Activated B cell treated with CpG ODN at 0.5 μM for 24 hours (primary cell): ENCODE measurements at regions of chr14 and their contacts with region 1.

Region 1: GRCh38 chr14:29927376-29928116 is at the start of gene PRKD1:
- DNase-seq: peak; percentile 32
- ATAC-seq: peak; percentile 68
- H3K4me3 Mint-ChIP-seq: peak within 1 kb of the TSS; percentile 82
- H3K27ac Mint-ChIP-seq: peak within 1 kb of the TSS; percentile 15
- H3K4me1 Mint-ChIP-seq: peaks cover 8% of the 10 kb centered on the region
- H3K27me3 Mint-ChIP-seq: peaks cover 18% of the 10 kb centered on the region
- CTCF ChIP-seq: no peak
- total RNA-seq, gene PRKD1: 5.1 and 6.7 TPM in 2 replicates

Region 2: GRCh38 chr14:29741909-29742401 is 185.6 kb before region 1 on chr14:
- CTCF ChIA-PET with region 1: no interaction called
- POLR2A ChIA-PET with region 1: no interaction called
- intact Hi-C with region 1: loop called (anchors 5 kb)
- DNase-seq: no peak
- ATAC-seq: no peak
- H3K4me3 Mint-ChIP-seq: no peak overlapping the region
- H3K27ac Mint-ChIP-seq: no peak overlapping the region
- H3K4me1 Mint-ChIP-seq: peaks cover 9% of the 10 kb centered on the region
- H3K27me3 Mint-ChIP-seq: no peaks in the 10 kb centered on the region
- CTCF ChIP-seq: no peak

Region 3: DNA sequence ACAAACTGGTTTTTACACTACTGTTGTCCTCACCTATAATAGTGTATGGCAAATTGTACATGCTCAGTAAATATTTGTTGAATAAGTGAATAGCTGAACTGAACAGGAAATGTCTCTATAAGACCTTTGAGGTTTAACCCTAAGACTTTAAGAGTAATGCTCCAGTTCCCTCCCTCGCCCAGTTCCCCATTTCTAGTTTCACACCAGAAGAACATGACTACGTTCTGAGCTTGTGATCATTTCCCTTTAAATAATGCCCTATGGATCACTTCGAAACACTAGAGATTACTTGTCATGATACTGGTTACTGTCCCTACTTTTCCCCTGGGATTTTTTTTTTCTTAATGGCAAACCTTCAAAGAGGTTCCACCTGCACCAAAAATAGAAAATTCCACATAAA is 69.2 kb before region 1 on chr14:
- CTCF ChIA-PET with region 1: interaction called, 3 read pairs
- POLR2A ChIA-PET with region 1: interaction called, 5 read pairs
- intact Hi-C with region 1: loop called (anchors 1 kb)
- DNase-seq: no peak
- ATAC-seq: peak; percentile 80
- H3K4me3 Mint-ChIP-seq: peak overlapping the region; percentile 80
- H3K27ac Mint-ChIP-seq: peak overlapping the region; percentile 98
- H3K4me1 Mint-ChIP-seq: peaks cover 43% of the 10 kb centered on the region
- H3K27me3 Mint-ChIP-seq: no peaks in the 10 kb centered on the region
- CTCF ChIP-seq: no peak